ENCODE measurements at regions of chr9 and their contacts with region 1.

Region 1: GRCh38 chr9:112793213-112793810 is 42.8 kb downstream of the SNX30 start:
- DNase-seq: peak; percentile 34
- ATAC-seq: peak; percentile 99
- H3K4me3 ChIP-seq: no peak overlapping the region
- H3K27ac ChIP-seq: no peak overlapping the region
- H3K4me1 ChIP-seq: peaks cover 11% of the 10 kb centered on the region
- H3K27me3 ChIP-seq: peaks cover 0 to 1% of the 10 kb centered on the region in 2 experiments; a peak in 1 of 4 replicates
- CTCF ChIP-seq: peak; percentile 89 to 94 (median 91)
- EP300 ChIP-seq: no peak
- POLR2A ChIP-seq: no peak
- RAD21 ChIP-seq: peak; percentile 95

Region 2: GRCh38 chr9:112086627-112087026 is 706.7 kb before region 1 on chr9:
- CTCF ChIA-PET with region 1: interaction called, 5 read pairs
- POLR2A ChIA-PET with region 1: no interaction called
- RAD21 ChIA-PET with region 1: no interaction called
- SMC1A ChIA-PET with region 1: no interaction called
- in situ Hi-C with region 1: no loop called
- intact Hi-C with region 1: loop called (anchors 10 kb)
- DNase-seq: no peak
- ATAC-seq: peak; percentile 36; the same call in 1 of the 3 replicates
- H3K4me3 ChIP-seq: no peak overlapping the region
- H3K27ac ChIP-seq: no peak overlapping the region
- H3K4me1 ChIP-seq: no peaks in the 10 kb centered on the region; the same call in 1 of the 2 replicates
- H3K27me3 ChIP-seq: no peaks in the 10 kb centered on the region
- CTCF ChIP-seq: peak; percentile 47 to 59 (median 51); a peak in 5 of 6 replicates
- EP300 ChIP-seq: no peak
- POLR2A ChIP-seq: no peak
- RAD21 ChIP-seq: peak; percentile 83

Region 3: DNA sequence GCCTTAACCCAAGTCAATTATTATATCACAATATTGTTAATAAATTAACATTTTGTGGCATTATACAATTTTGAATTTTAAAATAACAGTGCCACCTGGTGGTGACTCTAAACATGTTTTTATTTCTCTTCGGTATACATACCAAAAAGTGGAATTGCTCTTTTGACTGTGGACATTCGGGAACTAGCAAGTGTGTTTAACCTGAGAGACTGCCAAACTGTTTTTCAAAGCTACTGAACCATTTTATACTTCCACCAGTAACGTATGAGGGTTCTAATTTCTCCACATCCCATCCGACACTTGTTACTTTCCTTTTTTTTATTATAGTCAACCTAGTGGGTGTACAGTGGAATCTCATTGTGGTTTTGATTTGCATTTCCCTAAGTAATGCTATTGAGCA is 431.7 kb before region 1 on chr9:
- CTCF ChIA-PET with region 1: interaction called, 5 read pairs
- POLR2A ChIA-PET with region 1: no interaction called
- RAD21 ChIA-PET with region 1: no interaction called
- SMC1A ChIA-PET with region 1: no interaction called
- in situ Hi-C with region 1: no loop called
- intact Hi-C with region 1: loop called (anchors 5 kb)
- DNase-seq: no peak
- ATAC-seq: peak; percentile 71
- H3K4me3 ChIP-seq: no peak overlapping the region
- H3K27ac ChIP-seq: no peak overlapping the region
- H3K4me1 ChIP-seq: no peaks in the 10 kb centered on the region
- H3K27me3 ChIP-seq: no peaks in the 10 kb centered on the region
- CTCF ChIP-seq: peak in 2 of 3 experiments; percentile 30 to 55; a peak in 2 of 6 replicates
- EP300 ChIP-seq: no peak
- POLR2A ChIP-seq: no peak
- RAD21 ChIP-seq: peak; percentile 60

Region 4: GRCh38 chr9:112717661-112718341 is 75.5 kb before region 1 on chr9 and contains the start of gene INIP:
- CTCF ChIA-PET with region 1: interaction called, 11 read pairs
- POLR2A ChIA-PET with region 1: no interaction called
- RAD21 ChIA-PET with region 1: interaction called, 3 read pairs
- SMC1A ChIA-PET with region 1: interaction called, 3 read pairs
- in situ Hi-C with region 1: no loop called
- intact Hi-C with region 1: loop called (anchors 5 kb)
- DNase-seq: peak; percentile 87
- ATAC-seq: peak; percentile 94
- H3K4me3 ChIP-seq: peak within 1 kb of the TSS; percentile 82
- H3K27ac ChIP-seq: peak within 1 kb of the TSS; percentile 69
- H3K4me1 ChIP-seq: peaks cover 17% of the 10 kb centered on the region
- H3K27me3 ChIP-seq: no peaks in the 10 kb centered on the region
- CTCF ChIP-seq: peak; percentile 26 to 54 (median 26); a peak in 4 of 6 replicates
- EP300 ChIP-seq: no peak
- POLR2A ChIP-seq: peak; percentile 93
- RAD21 ChIP-seq: peak; percentile 55
- polyA plus RNA-seq, gene INIP: 61.2 to 66.5 TPM

Region 5: GRCh38 chr9:112819635-112820496 is 26.6 kb after region 1 on chr9:
- CTCF ChIA-PET with region 1: interaction called, 11 read pairs
- POLR2A ChIA-PET with region 1: no interaction called
- RAD21 ChIA-PET with region 1: interaction called, 4 read pairs
- SMC1A ChIA-PET with region 1: interaction called, 5 read pairs
- in situ Hi-C with region 1: no loop called
- intact Hi-C with region 1: no loop called
- DNase-seq: peak; percentile 26
- ATAC-seq: peak; percentile 96
- H3K4me3 ChIP-seq: no peak overlapping the region
- H3K27ac ChIP-seq: no peak overlapping the region
- H3K4me1 ChIP-seq: peaks cover 13% of the 10 kb centered on the region
- H3K27me3 ChIP-seq: no peaks in the 10 kb centered on the region; a peak in 2 of 4 replicates
- CTCF ChIP-seq: peak; percentile 69 to 76 (median 76)
- EP300 ChIP-seq: no peak
- POLR2A ChIP-seq: no peak
- RAD21 ChIP-seq: peak; percentile 85

Region 6: GRCh38 chr9:112869041-112869529 is 75.8 kb after region 1 on chr9:
- CTCF ChIA-PET with region 1: no interaction called
- POLR2A ChIA-PET with region 1: no interaction called
- RAD21 ChIA-PET with region 1: no interaction called
- SMC1A ChIA-PET with region 1: no interaction called
- in situ Hi-C with region 1: no loop called
- intact Hi-C with region 1: no loop called
- DNase-seq: no peak
- ATAC-seq: peak; percentile 50; the same call in 2 of the 3 replicates
- H3K4me3 ChIP-seq: no peak overlapping the region
- H3K27ac ChIP-seq: 0 out of 2 replicates have a peak overlapping the region, but pooled peaks have one; percentile 15
- H3K4me1 ChIP-seq: peaks cover 20% of the 10 kb centered on the region
- H3K27me3 ChIP-seq: no peaks in the 10 kb centered on the region; a peak in 1 of 4 replicates
- CTCF ChIP-seq: no peak
- EP300 ChIP-seq: no peak
- POLR2A ChIP-seq: no peak
- RAD21 ChIP-seq: no peak

Region 7: DNA sequence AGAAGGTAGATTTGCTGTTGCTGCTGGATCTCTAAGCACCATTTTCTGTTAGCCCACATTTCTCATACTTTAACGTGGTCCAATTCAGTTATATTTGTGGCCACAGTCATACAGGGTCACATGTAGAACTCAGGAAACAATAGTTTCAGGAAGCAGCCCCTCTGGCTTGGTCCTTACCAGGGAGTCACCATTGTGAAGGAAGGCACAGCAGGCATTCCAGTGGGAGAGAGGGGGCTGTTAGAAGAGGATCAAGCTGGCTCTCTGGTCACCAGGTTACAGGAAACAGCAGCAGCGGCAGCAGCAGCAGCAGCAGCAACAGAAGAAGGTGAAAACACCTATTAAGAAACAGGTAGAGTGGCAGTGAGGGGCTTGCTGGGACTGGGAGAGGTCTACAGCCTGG is 631.8 kb after region 1 on chr9:
- CTCF ChIA-PET with region 1: no interaction called
- POLR2A ChIA-PET with region 1: no interaction called
- RAD21 ChIA-PET with region 1: no interaction called
- SMC1A ChIA-PET with region 1: no interaction called
- in situ Hi-C with region 1: no loop called
- intact Hi-C with region 1: no loop called
- DNase-seq: no peak
- ATAC-seq: no peak
- H3K4me3 ChIP-seq: no peak overlapping the region
- H3K27ac ChIP-seq: no peak overlapping the region
- H3K4me1 ChIP-seq: no peaks in the 10 kb centered on the region
- H3K27me3 ChIP-seq: no peaks in the 10 kb centered on the region
- CTCF ChIP-seq: no peak
- EP300 ChIP-seq: no peak
- POLR2A ChIP-seq: no peak
- RAD21 ChIP-seq: no peak